ENCODE measurements at regions of chr3 and their contacts with region 1.

Region 1: DNA sequence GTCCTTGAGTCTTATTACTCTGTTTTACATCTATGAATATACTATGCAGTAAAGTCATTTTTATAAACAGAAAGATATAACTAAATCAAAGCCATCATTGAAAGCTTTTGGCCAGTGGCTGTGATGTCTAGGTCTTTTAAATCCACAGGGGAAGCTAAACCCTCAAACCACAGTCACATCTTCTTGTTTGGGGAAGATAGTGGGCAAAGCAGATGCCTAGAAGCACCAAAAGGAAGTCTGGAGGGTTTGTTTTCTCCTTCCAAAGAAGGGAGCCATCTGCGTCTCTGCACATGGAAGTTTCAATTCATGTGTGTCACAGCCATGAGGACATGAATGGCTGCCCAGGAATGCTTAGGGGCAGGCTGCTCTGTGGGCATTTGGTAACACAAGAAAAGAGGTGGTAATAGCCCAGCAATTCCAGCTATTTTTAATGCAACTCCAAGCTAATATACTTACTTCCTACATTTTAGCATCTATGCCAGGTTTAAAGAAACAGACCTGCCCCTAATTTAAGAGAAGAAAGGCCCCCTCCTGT is 322.2 kb downstream of the SLC9A9 start:
- DNase-seq: no peak
- ATAC-seq: no peak
- H3K4me3 ChIP-seq: no peak overlapping the region
- H3K27ac ChIP-seq: no peak overlapping the region
- H3K4me1 ChIP-seq: no peaks in the 10 kb centered on the region
- H3K27me3 ChIP-seq: no peaks in the 10 kb centered on the region
- CTCF ChIP-seq: no peak

Region 2: GRCh38 chr3:143433787-143434378 is 92.2 kb before region 1 on chr3:
- CTCF ChIA-PET with region 1: no interaction called
- POLR2A ChIA-PET with region 1: no interaction called
- intact Hi-C with region 1: no loop called
- DNase-seq: peak; percentile 26
- ATAC-seq: no peak
- H3K4me3 ChIP-seq: no peak overlapping the region
- H3K27ac ChIP-seq: no peak overlapping the region
- H3K4me1 ChIP-seq: no peaks in the 10 kb centered on the region
- H3K27me3 ChIP-seq: no peaks in the 10 kb centered on the region
- CTCF ChIP-seq: peak; percentile 65

Region 3: GRCh38 chr3:143484851-143485512 is 41.1 kb before region 1 on chr3:
- CTCF ChIA-PET with region 1: no interaction called
- POLR2A ChIA-PET with region 1: no interaction called
- intact Hi-C with region 1: no loop called
- DNase-seq: no peak
- ATAC-seq: no peak
- H3K4me3 ChIP-seq: no peak overlapping the region
- H3K27ac ChIP-seq: no peak overlapping the region
- H3K4me1 ChIP-seq: no peaks in the 10 kb centered on the region
- H3K27me3 ChIP-seq: no peaks in the 10 kb centered on the region
- CTCF ChIP-seq: no peak

Region 4: DNA sequence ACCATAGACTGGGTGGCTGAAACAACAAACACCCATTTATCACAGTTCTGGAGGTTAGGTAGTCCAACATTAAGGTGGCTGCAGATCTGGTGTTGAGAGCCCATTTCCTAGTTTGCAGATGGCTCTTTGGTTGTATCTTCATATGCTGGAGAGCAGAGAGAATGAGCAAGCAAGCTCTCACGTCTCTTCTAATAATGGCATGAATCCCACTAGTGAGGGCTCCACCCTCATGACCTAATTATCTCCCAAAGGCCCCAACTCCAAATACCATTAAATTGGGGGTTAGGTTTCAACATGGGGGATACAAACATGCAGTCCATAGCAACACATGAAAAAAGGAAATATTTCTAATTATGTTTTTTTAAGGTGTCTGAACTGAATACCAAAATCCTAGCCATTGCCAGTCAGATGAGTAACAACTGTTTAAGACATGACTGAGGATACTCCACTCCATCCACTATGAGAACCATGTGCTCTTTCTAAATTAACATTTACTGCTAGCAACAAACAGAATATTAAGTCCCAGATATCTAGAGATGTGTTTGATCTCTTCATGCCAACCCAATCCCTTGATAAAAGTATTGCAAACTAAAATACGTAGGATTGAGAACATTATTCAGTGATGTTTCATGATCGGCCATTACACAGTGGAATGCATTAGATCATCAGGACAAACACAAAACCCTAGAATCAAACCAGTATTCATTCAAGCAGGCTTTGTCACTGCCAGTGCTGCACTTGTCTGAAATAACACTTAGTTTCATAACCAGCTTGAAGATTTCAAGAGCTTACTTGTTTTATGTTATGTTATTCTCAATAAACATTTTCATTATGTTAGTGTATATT is 18.1 kb before region 1 on chr3:
- CTCF ChIA-PET with region 1: no interaction called
- POLR2A ChIA-PET with region 1: interaction called, 10 read pairs
- intact Hi-C with region 1: no loop called
- DNase-seq: peak; percentile 43
- ATAC-seq: peak; percentile 55
- H3K4me3 ChIP-seq: no peak overlapping the region
- H3K27ac ChIP-seq: no peak overlapping the region
- H3K4me1 ChIP-seq: no peaks in the 10 kb centered on the region; the same call in 1 of the 2 replicates
- H3K27me3 ChIP-seq: no peaks in the 10 kb centered on the region
- CTCF ChIP-seq: no peak

Measured in PC-3 (cell line).